Left ventricle myocardium inferior (tissue), 1 donor: ENCODE measurements at regions of chr2 and their contacts with region 1.

Region 1: DNA sequence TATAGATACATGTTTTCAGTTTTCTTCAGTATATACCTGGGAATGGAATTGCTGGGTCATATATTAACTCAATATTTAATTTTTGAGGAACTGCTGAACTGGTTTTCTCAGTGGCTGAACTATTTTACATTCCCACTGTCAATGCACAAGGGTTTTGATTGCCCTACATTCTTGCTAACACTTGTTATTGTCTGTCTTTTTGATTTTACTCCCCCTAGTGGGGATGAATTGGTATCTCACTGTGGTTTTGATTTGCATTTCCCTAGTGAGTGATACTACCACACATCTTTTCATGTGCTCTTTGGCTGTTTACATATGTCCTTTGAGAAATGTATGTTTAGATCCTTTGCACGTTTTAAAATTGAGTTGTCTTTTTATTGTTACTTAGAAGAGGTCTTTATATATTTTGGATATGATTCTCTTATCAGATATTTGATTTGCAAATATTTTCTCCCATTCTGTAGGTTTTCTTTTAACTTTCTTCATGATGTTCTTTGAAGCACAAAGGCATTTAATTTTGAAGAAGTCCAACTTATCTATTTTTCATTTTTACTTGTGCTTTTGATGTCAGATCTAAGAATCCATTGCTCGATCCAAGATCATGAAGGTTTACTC is 36.2 kb downstream of the ASB1 start:
- DNase-seq: no peak
- H3K4me3 ChIP-seq: no peak overlapping the region
- H3K27ac ChIP-seq: no peak overlapping the region
- H3K4me1 ChIP-seq: peaks cover 26% of the 10 kb centered on the region
- H3K27me3 ChIP-seq: peaks cover 3% of the 10 kb centered on the region
- CTCF ChIP-seq: peak; percentile 76

Region 2: GRCh38 chr2:238370823-238371372 is 92.0 kb before region 1 on chr2:
- intact Hi-C with region 1: loop called (anchors 5 kb)
- DNase-seq: peak; percentile 50
- H3K4me3 ChIP-seq: no peak overlapping the region
- H3K27ac ChIP-seq: peak overlapping the region; percentile 6
- H3K4me1 ChIP-seq: peaks cover 8% of the 10 kb centered on the region
- H3K27me3 ChIP-seq: no peaks in the 10 kb centered on the region
- CTCF ChIP-seq: peak; percentile 86

Region 3: DNA sequence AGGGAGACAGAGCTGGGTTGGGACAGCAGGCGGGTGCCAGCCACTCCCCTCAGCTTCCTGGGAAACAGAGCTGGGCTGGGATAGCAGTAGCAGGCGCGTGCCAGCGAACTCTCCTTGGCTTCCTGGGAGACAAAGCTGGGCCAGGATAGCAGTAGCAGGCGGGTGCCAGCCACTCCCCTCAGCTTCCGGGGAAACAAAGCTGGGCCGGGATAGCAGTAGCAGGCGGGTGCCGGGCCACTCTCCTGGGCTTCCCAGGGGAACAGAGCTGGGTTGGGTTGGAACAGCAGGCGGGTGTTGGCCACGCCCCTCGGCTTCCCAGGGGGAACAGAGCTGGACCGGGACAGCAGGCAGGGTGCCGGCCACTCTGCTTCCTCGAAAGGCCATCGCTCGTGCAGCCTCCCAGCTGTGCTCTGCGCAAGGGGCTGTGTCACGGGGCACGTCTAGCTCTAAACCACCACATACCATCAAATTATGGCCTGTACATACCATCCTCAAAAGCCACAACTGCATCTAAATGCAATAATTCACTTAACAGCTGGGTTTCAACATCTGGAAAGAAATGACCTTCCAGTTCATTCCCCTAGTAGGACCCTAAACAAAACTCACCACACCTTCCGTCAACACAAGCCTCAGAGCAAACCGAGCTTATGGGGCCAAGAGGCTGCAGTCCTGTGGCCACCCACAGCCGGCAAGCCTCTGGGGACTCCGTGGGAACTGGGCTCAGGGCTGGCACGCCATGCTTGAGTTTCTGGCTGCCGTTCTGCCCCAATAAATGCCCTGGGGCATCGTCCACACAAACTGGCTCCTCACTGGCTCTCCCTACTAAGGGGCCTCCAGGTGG is 613.2 kb after region 1 on chr2:
- intact Hi-C with region 1: no loop called
- DNase-seq: peak; percentile 28
- H3K4me3 ChIP-seq: no peak overlapping the region
- H3K27ac ChIP-seq: no peak overlapping the region
- H3K4me1 ChIP-seq: peaks cover 10% of the 10 kb centered on the region
- H3K27me3 ChIP-seq: no peaks in the 10 kb centered on the region
- CTCF ChIP-seq: no peak